ENCODE measurements at regions of chr7 and their contacts with region 1.

Region 1: GRCh38 chr7:95454438-95455045 is 19.7 kb upstream of the PON2 start:
- DNase-seq: no peak
- H3K4me3 ChIP-seq: no peak overlapping the region
- H3K4me3 Mint-ChIP-seq: no peak overlapping the region
- H3K27ac Mint-ChIP-seq: no peak overlapping the region
- H3K4me1 ChIP-seq: no peaks in the 10 kb centered on the region
- H3K4me1 Mint-ChIP-seq: no peaks in the 10 kb centered on the region
- H3K27me3 ChIP-seq: no peaks in the 10 kb centered on the region
- H3K27me3 Mint-ChIP-seq: no peaks in the 10 kb centered on the region
- CTCF ChIP-seq: no peak

Region 2: DNA sequence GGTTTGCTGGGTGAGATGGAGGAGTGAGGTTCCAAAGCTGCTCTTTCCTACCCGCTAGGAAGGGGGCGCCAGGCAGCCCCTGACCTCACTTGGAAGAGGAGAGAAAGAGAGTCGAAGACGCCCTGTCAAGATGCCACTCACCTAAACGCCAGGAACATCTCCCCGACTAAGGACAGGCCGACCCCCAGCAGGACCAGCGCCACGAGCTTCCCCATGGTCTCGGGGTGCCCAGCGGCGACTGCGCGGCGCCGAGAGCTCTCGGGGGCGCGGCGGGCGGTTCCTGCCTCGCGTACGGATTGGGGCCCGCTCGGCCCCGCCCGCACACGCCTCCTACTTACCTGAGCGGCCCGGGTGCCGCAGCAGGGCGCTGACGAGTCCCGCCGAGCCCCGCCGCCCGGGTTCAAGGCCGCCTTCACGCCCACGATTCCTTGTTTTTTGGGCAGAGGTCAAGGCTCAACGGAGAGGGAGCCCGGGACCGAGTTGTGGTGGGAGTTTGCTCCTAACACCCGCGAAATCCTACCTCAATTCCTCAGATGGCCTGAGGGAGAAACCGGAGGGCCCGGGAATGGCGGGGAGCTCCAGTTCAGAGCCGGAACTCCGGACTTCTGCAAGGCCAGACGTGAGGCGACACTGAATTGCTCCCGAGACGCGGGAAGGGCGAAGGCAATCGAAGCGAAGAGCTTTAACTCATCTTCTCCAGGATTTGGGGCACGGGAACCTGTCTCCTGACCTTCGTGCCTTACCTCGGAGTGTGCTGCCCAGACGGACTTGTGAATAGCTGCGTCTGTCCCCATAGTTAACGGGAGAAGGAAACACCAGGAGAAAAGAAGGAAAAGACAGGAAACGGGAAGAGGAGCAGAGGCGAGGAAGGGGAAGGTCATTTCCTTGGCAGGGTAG is 58.2 kb before region 1 on chr7 and contains the start of gene PON3:
- CTCF ChIA-PET with region 1: interaction called, 3 read pairs
- POLR2A ChIA-PET with region 1: no interaction called
- intact Hi-C with region 1: loop called (anchors 1 kb)
- DNase-seq: peak; percentile 73 to 81
- H3K4me3 ChIP-seq: peak within 1 kb of the TSS; percentile 83
- H3K4me3 Mint-ChIP-seq: peak within 1 kb of the TSS; percentile 82
- H3K27ac Mint-ChIP-seq: peak within 1 kb of the TSS; percentile 63
- H3K4me1 ChIP-seq: peaks cover 9% of the 10 kb centered on the region; the same call in 1 of the 2 replicates
- H3K4me1 Mint-ChIP-seq: peaks cover 11% of the 10 kb centered on the region
- H3K27me3 ChIP-seq: no peaks in the 10 kb centered on the region
- H3K27me3 Mint-ChIP-seq: no peaks in the 10 kb centered on the region
- CTCF ChIP-seq: peak; percentile 75 to 87
- total RNA-seq, gene PON3: 13.4 and 15.0 TPM in 2 replicates

Region 3: DNA sequence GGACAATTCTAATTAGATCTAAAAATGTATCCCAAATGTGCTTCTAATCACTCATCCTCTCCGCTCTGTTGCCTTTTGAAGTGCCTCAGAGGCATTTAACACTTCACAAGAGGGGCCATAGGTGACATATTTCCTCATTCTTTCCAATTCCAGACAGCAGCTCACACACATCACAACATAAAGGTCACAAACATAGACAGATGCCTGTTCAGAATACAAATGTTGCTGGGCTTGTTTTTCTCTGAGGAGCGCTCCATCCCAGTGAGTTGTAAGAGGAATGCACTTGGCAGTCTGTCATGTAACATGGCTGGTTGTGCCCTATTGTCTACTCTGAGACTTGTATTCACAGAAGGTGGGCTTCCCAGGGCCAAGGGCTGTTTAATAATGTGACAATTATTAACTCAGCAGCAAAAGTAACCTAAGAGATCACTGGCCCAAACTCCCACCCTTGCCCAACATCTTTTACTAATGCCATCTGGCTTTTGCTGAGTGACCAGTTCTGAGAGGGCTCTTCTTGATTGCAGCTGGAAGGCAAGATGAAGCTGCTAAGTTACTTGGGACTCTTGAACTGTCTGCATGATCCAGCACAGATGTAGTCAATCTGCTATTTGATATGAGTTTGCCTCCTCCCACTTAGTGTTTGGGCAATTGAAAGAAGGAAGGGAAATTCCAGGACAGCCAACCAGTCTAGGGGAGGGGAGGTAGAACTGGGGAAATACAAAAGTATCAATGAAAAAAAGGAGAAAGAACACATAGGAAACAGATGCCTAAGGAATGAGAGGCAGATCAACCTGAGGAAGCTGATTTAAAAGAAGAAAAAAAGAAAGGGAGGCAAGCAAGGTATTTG is 33.3 kb before region 1 on chr7:
- CTCF ChIA-PET with region 1: no interaction called
- POLR2A ChIA-PET with region 1: no interaction called
- intact Hi-C with region 1: loop called (anchors 2 kb)
- DNase-seq: peak in 1 of 2 experiments; percentile 32
- H3K4me3 ChIP-seq: no peak overlapping the region
- H3K4me3 Mint-ChIP-seq: peak overlapping the region; percentile 23
- H3K27ac Mint-ChIP-seq: peak overlapping the region; percentile 59
- H3K4me1 ChIP-seq: peaks cover 26% of the 10 kb centered on the region
- H3K4me1 Mint-ChIP-seq: peaks cover 24% of the 10 kb centered on the region
- H3K27me3 ChIP-seq: no peaks in the 10 kb centered on the region
- H3K27me3 Mint-ChIP-seq: no peaks in the 10 kb centered on the region
- CTCF ChIP-seq: no peak

Measured in Caco-2 (cell line).